B cell (primary cell): ENCODE measurements at regions of chr1 and their contacts with region 1.

Region 1: DNA sequence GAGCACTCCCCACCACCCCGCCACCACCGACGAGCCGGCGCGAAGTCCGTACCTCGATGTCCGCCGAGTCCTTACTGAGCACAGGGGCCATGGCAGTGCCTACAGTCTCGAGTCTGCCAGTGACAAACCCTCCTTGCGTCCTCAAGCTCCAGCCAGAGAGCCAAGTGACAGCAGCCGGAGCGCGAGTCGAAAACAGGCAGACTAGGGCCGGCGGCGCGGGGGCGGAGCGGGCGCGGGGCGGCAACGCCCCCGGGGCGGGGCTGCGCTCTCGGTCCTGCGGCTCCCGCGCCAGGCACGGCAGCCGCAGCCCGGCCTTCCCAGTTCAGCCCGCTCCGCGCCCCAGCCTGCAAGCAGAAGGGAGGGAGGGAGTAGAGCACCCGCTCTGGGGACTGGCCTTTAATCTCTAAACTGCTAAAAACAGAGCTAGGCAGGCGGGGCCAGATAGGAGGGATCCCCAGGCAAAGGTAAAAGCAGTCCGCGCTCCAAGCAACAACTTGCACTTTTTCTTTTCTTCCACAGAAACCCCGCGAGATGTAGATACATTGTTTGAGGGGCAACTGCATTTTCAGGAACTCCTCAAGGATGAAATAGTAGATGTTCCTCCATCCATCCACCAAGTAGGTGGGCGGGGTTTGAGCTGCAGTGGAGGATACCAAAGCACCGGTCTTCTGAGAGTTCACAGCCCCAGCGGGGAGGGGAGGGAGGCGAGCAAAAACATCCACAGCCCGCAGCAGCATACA is at the start of gene DPYD:
- DNase-seq: peak; percentile 85
- ATAC-seq: peak; percentile 85
- H3K4me3 ChIP-seq: peak within 1 kb of the TSS; percentile 71 to 94 (median 83)
- H3K4me3 Mint-ChIP-seq: peak within 1 kb of the TSS; percentile 94
- H3K27ac ChIP-seq: peak within 1 kb of the TSS; percentile 72 to 75
- H3K27ac Mint-ChIP-seq: peak within 1 kb of the TSS; percentile 93
- H3K4me1 ChIP-seq: peaks cover 11 to 12% of the 10 kb centered on the region in 2 donors
- H3K4me1 Mint-ChIP-seq: peaks cover 22% of the 10 kb centered on the region
- H3K27me3 ChIP-seq: no peaks in the 10 kb centered on the region
- H3K27me3 Mint-ChIP-seq: no peaks in the 10 kb centered on the region
- CTCF ChIP-seq: no peak
- total RNA-seq, gene DPYD: 19.0 and 20.0 TPM in 2 replicates

Region 2: GRCh38 chr1:96721416-96722160 is 1199.4 kb before region 1 on chr1 and contains the start of gene PTBP2:
- CTCF ChIA-PET with region 1: no interaction called
- POLR2A ChIA-PET with region 1: no interaction called
- intact Hi-C with region 1: loop called (anchors 2 kb)
- DNase-seq: peak; percentile 91
- ATAC-seq: peak; percentile 88
- H3K4me3 ChIP-seq: peak within 1 kb of the TSS; percentile 85 to 96 (median 89)
- H3K4me3 Mint-ChIP-seq: peak within 1 kb of the TSS; percentile 97
- H3K27ac ChIP-seq: peak within 1 kb of the TSS; percentile 93 to 94
- H3K27ac Mint-ChIP-seq: peak within 1 kb of the TSS; percentile 99
- H3K4me1 ChIP-seq: peaks cover 13 to 18% of the 10 kb centered on the region in 2 donors
- H3K4me1 Mint-ChIP-seq: peaks cover 28% of the 10 kb centered on the region
- H3K27me3 ChIP-seq: no peaks in the 10 kb centered on the region
- H3K27me3 Mint-ChIP-seq: no peaks in the 10 kb centered on the region
- CTCF ChIP-seq: no peak
- total RNA-seq, gene PTBP2: 30.5 and 33.6 TPM in 2 replicates

Region 3: GRCh38 chr1:97414682-97415312 is 506.2 kb before region 1 on chr1:
- CTCF ChIA-PET with region 1: no interaction called
- POLR2A ChIA-PET with region 1: no interaction called
- intact Hi-C with region 1: no loop called
- DNase-seq: no peak
- ATAC-seq: no peak
- H3K4me3 ChIP-seq: no peak overlapping the region
- H3K4me3 Mint-ChIP-seq: no peak overlapping the region
- H3K27ac ChIP-seq: no peak overlapping the region
- H3K27ac Mint-ChIP-seq: no peak overlapping the region
- H3K4me1 ChIP-seq: no peaks in the 10 kb centered on the region
- H3K4me1 Mint-ChIP-seq: no peaks in the 10 kb centered on the region
- H3K27me3 ChIP-seq: no peaks in the 10 kb centered on the region
- H3K27me3 Mint-ChIP-seq: no peaks in the 10 kb centered on the region
- CTCF ChIP-seq: no peak

Region 4: DNA sequence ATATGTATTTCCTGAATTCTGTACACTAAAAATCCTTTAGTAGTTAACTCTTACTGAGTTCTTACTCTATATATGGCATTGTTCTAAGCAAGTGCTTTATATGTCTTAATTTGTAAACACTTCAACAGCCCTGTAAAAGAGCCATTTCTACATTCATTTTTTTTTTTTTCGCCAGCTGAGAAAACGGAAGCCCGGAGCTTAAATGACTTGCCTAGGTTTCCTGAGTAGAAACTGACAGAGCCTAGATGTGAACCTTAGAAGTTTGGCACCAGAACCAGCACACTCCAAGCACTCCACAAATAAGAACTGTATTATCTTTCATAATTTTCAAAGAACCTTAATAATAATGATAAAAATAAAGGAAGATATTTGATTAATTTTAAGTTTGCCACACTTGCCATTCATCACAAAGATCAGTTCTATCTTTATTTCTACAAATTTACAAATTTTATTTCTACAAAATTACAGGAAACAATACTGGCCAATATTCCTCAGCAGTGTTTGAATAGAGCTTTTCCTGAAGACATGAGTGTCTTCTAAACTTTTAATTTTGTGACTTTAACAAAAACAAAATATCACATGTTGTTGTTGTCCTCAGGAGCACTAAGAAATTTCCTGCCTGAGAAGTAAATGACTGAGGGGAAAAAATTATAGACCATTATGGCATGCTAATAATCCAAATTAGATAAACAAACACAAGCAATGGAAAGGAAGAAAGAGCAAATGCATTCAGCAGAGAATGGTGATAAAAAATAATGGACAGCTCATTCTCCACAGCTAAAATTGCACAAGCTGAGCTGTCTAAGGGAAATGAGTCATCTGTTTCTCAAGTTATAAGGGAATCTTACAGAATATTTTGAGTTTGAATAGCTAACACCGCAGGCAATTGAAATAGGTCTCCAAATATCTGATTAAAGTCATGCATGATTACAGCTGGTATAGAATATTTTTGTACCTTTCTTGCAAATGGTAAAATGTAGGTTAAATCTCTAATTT is 71.4 kb before region 1 on chr1:
- CTCF ChIA-PET with region 1: interaction called, 3 read pairs
- POLR2A ChIA-PET with region 1: no interaction called
- intact Hi-C with region 1: loop called (anchors 2 kb)
- DNase-seq: peak; percentile 23
- ATAC-seq: peak; percentile 36
- H3K4me3 ChIP-seq: no peak overlapping the region
- H3K4me3 Mint-ChIP-seq: peak overlapping the region; percentile 41
- H3K27ac ChIP-seq: peak overlapping the region in 1 of 2 donors; percentile 8
- H3K27ac Mint-ChIP-seq: peak overlapping the region; percentile 15
- H3K4me1 ChIP-seq: peaks cover 2 to 17% of the 10 kb centered on the region in 2 donors
- H3K4me1 Mint-ChIP-seq: peaks cover 19% of the 10 kb centered on the region
- H3K27me3 ChIP-seq: no peaks in the 10 kb centered on the region
- H3K27me3 Mint-ChIP-seq: no peaks in the 10 kb centered on the region
- CTCF ChIP-seq: no peak

Region 5: GRCh38 chr1:97938285-97938642 is 17.3 kb after region 1 on chr1:
- CTCF ChIA-PET with region 1: no interaction called
- POLR2A ChIA-PET with region 1: no interaction called
- intact Hi-C with region 1: no loop called
- DNase-seq: no peak
- ATAC-seq: no peak
- H3K4me3 ChIP-seq: no peak overlapping the region
- H3K4me3 Mint-ChIP-seq: no peak overlapping the region
- H3K27ac ChIP-seq: no peak overlapping the region
- H3K27ac Mint-ChIP-seq: no peak overlapping the region
- H3K4me1 ChIP-seq: no peaks in the 10 kb centered on the region
- H3K4me1 Mint-ChIP-seq: no peaks in the 10 kb centered on the region
- H3K27me3 ChIP-seq: no peaks in the 10 kb centered on the region
- H3K27me3 Mint-ChIP-seq: peaks cover under 1% of the 10 kb centered on the region
- CTCF ChIP-seq: no peak

Region 6: GRCh38 chr1:98048244-98048643 is 127.2 kb after region 1 on chr1:
- CTCF ChIA-PET with region 1: no interaction called
- POLR2A ChIA-PET with region 1: no interaction called
- intact Hi-C with region 1: loop called (anchors 5 kb)
- DNase-seq: peak; percentile 50
- ATAC-seq: no peak
- H3K4me3 ChIP-seq: no peak overlapping the region
- H3K4me3 Mint-ChIP-seq: no peak overlapping the region
- H3K27ac ChIP-seq: no peak overlapping the region
- H3K27ac Mint-ChIP-seq: no peak overlapping the region
- H3K4me1 ChIP-seq: peaks cover 24 to 34% of the 10 kb centered on the region in 2 donors
- H3K4me1 Mint-ChIP-seq: peaks cover 29% of the 10 kb centered on the region
- H3K27me3 ChIP-seq: peaks cover 1 to 66% (median 58%) of the 10 kb centered on the region in 4 experiments
- H3K27me3 Mint-ChIP-seq: peaks cover 78% of the 10 kb centered on the region
- CTCF ChIP-seq: no peak